ENCODE measurements at regions of chrX and their contacts with region 1.

Region 1: DNA sequence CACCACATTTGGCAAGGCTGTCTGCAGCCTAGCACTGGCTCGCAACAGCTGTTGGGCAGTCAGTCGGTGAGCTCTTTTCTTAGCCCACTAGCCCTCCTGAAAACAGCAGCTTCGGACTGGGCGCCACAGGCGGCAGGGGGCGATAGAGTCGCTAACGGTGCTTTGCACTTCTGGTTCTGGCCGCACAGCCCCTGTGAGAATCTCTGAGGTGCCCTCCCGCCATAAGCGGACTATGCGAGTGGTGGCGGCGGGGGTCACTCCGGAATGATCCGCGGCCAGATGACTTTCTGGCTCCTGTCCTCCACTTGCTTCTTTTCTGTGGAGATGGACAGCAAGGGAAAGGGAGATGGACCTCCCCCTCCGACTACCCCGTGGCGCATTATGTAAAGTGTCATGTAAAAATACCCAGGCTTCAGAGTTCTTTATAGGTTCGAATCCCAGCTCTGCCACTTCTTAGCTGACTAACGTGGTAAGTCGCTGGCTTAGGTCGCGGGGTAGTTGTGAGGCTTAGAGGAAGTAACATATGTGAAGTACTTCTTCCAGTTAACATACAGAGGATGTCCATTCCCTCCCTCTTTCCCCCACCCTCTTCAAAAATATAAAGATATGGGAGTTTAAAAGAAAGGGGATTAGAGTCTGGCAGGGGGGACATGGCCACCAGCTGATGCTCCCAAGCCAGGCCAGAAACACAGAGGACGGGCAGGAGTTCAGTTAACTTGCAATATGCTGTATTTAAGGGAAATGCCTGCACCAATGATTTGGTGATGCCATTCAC is 11.0 kb downstream of the ARHGAP36 start:
- DNase-seq: peak; percentile 72 to 86
- ATAC-seq: peak; percentile 79 to 96
- H3K4me3 ChIP-seq: peak overlapping the region; percentile 37
- H3K27ac ChIP-seq: no peak overlapping the region
- H3K4me1 ChIP-seq: no peaks in the 10 kb centered on the region
- CTCF ChIP-seq: peak; percentile 54
- EP300 ChIP-seq: no peak
- POLR2A ChIP-seq: no peak
- RAD21 ChIP-seq: peak; percentile 45 to 48; a peak in 3 of 5 replicates

Region 2: GRCh38 chrX:130944230-130944629 is 124.9 kb before region 1 on chrX:
- CTCF ChIA-PET with region 1: no interaction called
- POLR2A ChIA-PET with region 1: no interaction called
- DNase-seq: no peak
- ATAC-seq: no peak
- H3K4me3 ChIP-seq: no peak overlapping the region
- H3K27ac ChIP-seq: no peak overlapping the region
- H3K4me1 ChIP-seq: no peaks in the 10 kb centered on the region
- CTCF ChIP-seq: no peak
- EP300 ChIP-seq: no peak
- POLR2A ChIP-seq: no peak
- RAD21 ChIP-seq: no peak

Region 3: DNA sequence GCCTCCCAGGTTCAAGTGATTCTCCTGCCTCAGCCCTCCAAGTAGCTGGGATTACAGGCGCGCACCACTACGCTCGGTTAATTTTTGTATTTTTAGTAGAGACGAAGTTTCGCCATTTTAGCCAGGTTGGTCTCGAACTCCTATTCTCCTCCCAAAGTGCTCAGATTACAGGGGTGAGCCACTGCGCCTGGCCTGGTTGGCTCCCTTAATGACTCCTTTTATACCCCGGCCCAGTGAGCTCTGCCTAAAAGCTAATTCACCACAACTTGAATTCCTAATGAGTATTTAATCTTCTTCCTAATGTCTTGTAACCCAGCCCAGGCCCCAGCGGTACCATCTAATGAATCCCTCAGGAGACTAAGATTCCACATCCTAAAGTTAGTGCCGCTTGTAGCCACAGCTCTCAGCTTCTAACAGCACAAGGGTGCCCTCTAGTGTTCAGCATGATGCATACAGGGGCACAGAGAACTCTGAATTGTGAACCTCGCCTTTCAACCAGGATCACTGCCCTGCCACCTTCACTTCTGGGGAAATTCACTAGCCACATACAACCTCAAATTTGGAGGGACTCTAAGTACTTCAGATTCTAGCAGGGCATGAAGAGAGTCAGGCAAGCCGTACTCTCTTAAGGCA is 564.3 kb after region 1 on chrX:
- CTCF ChIA-PET with region 1: interaction called, 22 read pairs
- POLR2A ChIA-PET with region 1: no interaction called
- DNase-seq: peak; percentile 21 to 65
- ATAC-seq: peak; percentile 96 to 99; a peak in 5 of 6 replicates
- H3K4me3 ChIP-seq: no peak overlapping the region
- H3K27ac ChIP-seq: no peak overlapping the region
- H3K4me1 ChIP-seq: no peaks in the 10 kb centered on the region
- CTCF ChIP-seq: peak; percentile 79
- EP300 ChIP-seq: no peak
- POLR2A ChIP-seq: no peak
- RAD21 ChIP-seq: peak; percentile 87 to 91

Measured in A549 (cell line).